Heart right ventricle (tissue), 16 donors: ENCODE measurements at regions of chr13 and their contacts with region 1.

Region 1: DNA sequence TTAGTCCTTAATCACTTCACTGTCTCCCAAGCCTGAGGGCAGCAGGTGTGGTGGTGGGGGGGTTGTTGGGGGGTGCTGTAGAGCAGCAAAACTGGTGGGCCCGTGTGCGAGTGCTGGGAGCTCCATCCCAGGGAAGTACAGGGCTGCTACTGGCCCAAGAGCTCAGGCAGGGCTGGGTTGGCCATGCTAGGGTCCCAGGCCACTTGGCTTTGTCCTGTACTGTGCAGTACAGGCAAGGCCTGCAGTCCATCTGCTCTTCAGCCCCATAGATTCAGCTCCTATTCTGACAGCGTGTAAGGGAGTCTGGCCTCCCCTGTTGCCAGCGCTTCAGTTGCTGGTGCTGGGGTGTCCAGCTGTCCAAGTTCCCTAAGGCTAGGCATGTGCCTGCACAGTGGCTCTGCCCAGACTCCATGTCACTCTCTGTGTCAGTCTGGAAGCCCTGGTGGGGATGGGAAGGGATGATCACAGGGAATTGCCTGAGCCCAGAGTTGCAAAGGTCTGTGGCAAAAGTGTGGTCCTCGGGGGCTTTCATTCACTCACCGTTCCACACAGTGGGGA is 1261.7 kb downstream of the EFNB2 start:
- DNase-seq: no peak
- ATAC-seq: no peak
- H3K4me3 ChIP-seq: no peak overlapping the region
- H3K27ac ChIP-seq: no peak overlapping the region
- H3K4me1 ChIP-seq: no peaks in the 10 kb centered on the region
- H3K27me3 ChIP-seq: no peaks in the 10 kb centered on the region
- CTCF ChIP-seq: no peak

Region 2: DNA sequence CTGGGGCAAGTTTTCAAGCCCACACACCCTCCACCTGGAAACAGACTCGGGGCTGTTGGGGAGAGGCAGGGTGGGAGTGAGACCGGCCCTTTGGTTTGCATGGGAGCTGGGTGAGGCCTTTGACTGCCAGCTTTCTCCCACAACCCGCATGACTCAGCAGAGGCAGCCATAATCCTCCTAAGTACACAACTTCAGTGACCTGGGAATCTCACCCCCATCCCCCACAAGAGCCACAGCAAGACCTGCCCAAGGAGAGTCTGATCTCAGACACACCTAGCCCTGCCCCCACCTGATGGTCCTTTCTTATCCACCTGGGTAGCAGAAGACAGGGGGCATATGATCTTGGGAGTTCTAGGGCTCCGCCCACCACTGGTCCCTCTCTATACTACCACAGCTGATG is 353.7 kb before region 1 on chr13:
- intact Hi-C with region 1: no loop called
- DNase-seq: no peak
- ATAC-seq: no peak
- H3K4me3 ChIP-seq: no peak overlapping the region
- H3K27ac ChIP-seq: no peak overlapping the region
- H3K4me1 ChIP-seq: no peaks in the 10 kb centered on the region
- H3K27me3 ChIP-seq: no peaks in the 10 kb centered on the region
- CTCF ChIP-seq: no peak

Region 3: GRCh38 chr13:105259426-105259825 is 14.3 kb before region 1 on chr13:
- intact Hi-C with region 1: loop called in 1 of 10 experiments (anchors 1 kb)
- DNase-seq: no peak
- ATAC-seq: no peak
- H3K4me3 ChIP-seq: no peak overlapping the region
- H3K27ac ChIP-seq: no peak overlapping the region
- H3K4me1 ChIP-seq: no peaks in the 10 kb centered on the region
- H3K27me3 ChIP-seq: no peaks in the 10 kb centered on the region
- CTCF ChIP-seq: no peak